ENCODE measurements at regions of chr4 and their contacts with region 1.

Region 1: GRCh38 chr4:15457406-15458201 is 12.1 kb upstream of the CC2D2A start:
- DNase-seq: peak; percentile 20
- ATAC-seq: peak; percentile 97
- H3K4me3 ChIP-seq: no peak overlapping the region
- H3K27ac ChIP-seq: no peak overlapping the region
- H3K4me1 ChIP-seq: no peaks in the 10 kb centered on the region
- H3K27me3 ChIP-seq: no peaks in the 10 kb centered on the region
- CTCF ChIP-seq: peak; percentile 66 to 71 (median 67)
- EP300 ChIP-seq: no peak
- POLR2A ChIP-seq: no peak
- RAD21 ChIP-seq: peak; percentile 67

Region 2: GRCh38 chr4:15238720-15239119 is 218.9 kb before region 1 on chr4:
- CTCF ChIA-PET with region 1: interaction called, 50 read pairs
- POLR2A ChIA-PET with region 1: no interaction called
- RAD21 ChIA-PET with region 1: interaction called, 3 read pairs
- SMC1A ChIA-PET with region 1: interaction called, 3 read pairs
- in situ Hi-C with region 1: loop called (anchors 5 kb)
- intact Hi-C with region 1: loop called (anchors 1 kb)
- DNase-seq: no peak
- ATAC-seq: peak; percentile 83
- H3K4me3 ChIP-seq: no peak overlapping the region
- H3K27ac ChIP-seq: no peak overlapping the region
- H3K4me1 ChIP-seq: peaks cover 2% of the 10 kb centered on the region
- H3K27me3 ChIP-seq: no peaks in the 10 kb centered on the region
- CTCF ChIP-seq: peak; percentile 60 to 78 (median 60); a peak in 5 of 6 replicates
- EP300 ChIP-seq: no peak
- POLR2A ChIP-seq: no peak
- RAD21 ChIP-seq: peak; percentile 81

Region 3: GRCh38 chr4:15469402-15470127 is 12.0 kb after region 1 on chr4 and contains the start of gene CC2D2A:
- CTCF ChIA-PET with region 1: interaction called, 24 read pairs
- POLR2A ChIA-PET with region 1: no interaction called
- RAD21 ChIA-PET with region 1: interaction called, 4 read pairs
- SMC1A ChIA-PET with region 1: interaction called, 12 read pairs
- in situ Hi-C with region 1: no loop called
- intact Hi-C with region 1: no loop called
- DNase-seq: no peak
- ATAC-seq: peak; percentile 14; the same call in 1 of the 3 replicates
- H3K4me3 ChIP-seq: no peak within 1 kb of the TSS
- H3K27ac ChIP-seq: no peak within 1 kb of the TSS
- H3K4me1 ChIP-seq: peaks cover 4% of the 10 kb centered on the region; the same call in 1 of the 2 replicates
- H3K27me3 ChIP-seq: no peaks in the 10 kb centered on the region; a peak in 1 of 4 replicates
- CTCF ChIP-seq: no peak
- EP300 ChIP-seq: no peak
- POLR2A ChIP-seq: no peak
- RAD21 ChIP-seq: no peak
- polyA plus RNA-seq, gene CC2D2A: 0.26 to 0.43 TPM

Region 4: GRCh38 chr4:15488658-15489470 is 31.3 kb after region 1 on chr4:
- CTCF ChIA-PET with region 1: no interaction called
- POLR2A ChIA-PET with region 1: no interaction called
- RAD21 ChIA-PET with region 1: no interaction called
- SMC1A ChIA-PET with region 1: no interaction called
- in situ Hi-C with region 1: no loop called
- intact Hi-C with region 1: no loop called
- DNase-seq: no peak
- ATAC-seq: no peak
- H3K4me3 ChIP-seq: no peak overlapping the region
- H3K27ac ChIP-seq: no peak overlapping the region
- H3K4me1 ChIP-seq: no peaks in the 10 kb centered on the region
- H3K27me3 ChIP-seq: no peaks in the 10 kb centered on the region
- CTCF ChIP-seq: no peak
- EP300 ChIP-seq: no peak
- POLR2A ChIP-seq: no peak
- RAD21 ChIP-seq: no peak

Measured in GM12878 (cell line).